Activated T-helper 1 cell treated with anti-CD3 and anti-CD28 coated beads, Interleukin-12 subunit alpha, Interleukin-12 subunit beta, Interleukin-2, Interleukin-4 antibody, amounts not matched to agents 30 ng/mL and 10 ng/mL and 1 ng/mL, durations not matched to agents 14 hours and 24 hours and 36 hours (primary cell): ENCODE measurements at regions of chr6 and their contacts with region 1.

Region 1: DNA sequence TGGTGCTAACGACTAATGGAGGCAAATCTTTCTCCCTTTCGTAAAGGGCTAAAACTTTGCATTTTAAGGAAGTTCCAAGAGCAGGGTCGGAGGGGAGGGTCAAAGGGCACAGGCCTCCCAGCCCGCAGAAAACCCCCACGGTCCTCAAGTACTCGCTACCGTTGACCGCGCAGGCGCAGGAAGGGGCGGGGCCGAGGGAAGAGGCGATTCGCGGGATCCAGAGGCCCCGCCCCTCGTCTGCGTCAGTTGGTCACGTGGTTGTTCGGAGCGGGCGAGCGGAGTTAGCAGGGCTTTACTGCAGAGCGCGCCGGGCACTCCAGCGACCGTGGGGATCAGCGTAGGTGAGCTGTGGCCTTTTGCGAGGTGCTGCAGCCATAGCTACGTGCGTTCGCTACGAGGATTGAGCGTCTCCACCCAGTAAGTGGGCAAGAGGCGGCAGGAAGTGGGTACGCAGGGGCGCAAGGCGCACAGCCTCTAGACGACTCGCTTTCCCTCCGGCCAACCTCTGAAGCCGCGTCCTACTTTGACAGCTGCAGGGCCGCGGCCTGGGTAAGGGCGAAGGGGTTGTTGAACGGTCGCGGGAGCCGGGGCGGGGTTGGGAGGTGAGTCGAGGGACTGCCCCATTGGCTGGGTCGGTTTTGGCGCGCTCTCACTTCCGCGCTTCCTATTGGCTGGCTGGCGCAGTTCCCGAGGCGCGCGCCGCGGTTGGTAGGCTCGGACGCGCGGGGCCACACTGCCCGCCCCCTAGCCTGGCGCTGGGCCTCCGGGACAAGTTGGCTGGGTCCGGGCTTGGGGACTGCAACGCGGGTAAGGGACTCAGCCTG is at the start of gene GMNN:
- DNase-seq: peak; percentile 96
- H3K4me3 Mint-ChIP-seq: peak within 1 kb of the TSS; percentile 98
- H3K27ac Mint-ChIP-seq: peak within 1 kb of the TSS; percentile 98
- H3K4me1 Mint-ChIP-seq: peaks cover 39% of the 10 kb centered on the region
- H3K27me3 Mint-ChIP-seq: no peaks in the 10 kb centered on the region
- total RNA-seq, gene GMNN: 80.8 and 83.5 TPM in 2 replicates

Region 2: DNA sequence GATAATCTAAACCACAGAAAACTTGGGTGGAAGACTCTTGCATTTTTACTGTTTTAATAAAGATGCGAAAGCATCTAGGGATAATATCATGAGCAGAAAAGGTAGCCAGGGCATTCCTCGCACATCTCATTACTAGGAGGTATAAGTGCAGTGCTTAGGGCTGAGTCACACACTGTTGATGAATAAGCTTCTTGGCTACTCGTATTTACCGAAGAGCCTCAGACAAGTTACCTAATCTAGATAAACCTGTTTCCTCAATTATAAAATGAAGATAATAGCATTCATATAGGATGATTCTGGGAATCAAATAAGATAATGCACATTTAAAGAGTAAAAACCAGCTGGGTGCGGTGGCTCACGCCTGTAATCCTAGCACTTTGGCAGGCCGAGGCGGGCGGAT is 128.1 kb before region 1 on chr6:
- intact Hi-C with region 1: loop called (anchors 5 kb)
- DNase-seq: no peak
- H3K4me3 Mint-ChIP-seq: peak overlapping the region; percentile 86
- H3K27ac Mint-ChIP-seq: peak overlapping the region; percentile 72
- H3K4me1 Mint-ChIP-seq: peaks cover 18% of the 10 kb centered on the region
- H3K27me3 Mint-ChIP-seq: peaks cover 20% of the 10 kb centered on the region

Region 3: DNA sequence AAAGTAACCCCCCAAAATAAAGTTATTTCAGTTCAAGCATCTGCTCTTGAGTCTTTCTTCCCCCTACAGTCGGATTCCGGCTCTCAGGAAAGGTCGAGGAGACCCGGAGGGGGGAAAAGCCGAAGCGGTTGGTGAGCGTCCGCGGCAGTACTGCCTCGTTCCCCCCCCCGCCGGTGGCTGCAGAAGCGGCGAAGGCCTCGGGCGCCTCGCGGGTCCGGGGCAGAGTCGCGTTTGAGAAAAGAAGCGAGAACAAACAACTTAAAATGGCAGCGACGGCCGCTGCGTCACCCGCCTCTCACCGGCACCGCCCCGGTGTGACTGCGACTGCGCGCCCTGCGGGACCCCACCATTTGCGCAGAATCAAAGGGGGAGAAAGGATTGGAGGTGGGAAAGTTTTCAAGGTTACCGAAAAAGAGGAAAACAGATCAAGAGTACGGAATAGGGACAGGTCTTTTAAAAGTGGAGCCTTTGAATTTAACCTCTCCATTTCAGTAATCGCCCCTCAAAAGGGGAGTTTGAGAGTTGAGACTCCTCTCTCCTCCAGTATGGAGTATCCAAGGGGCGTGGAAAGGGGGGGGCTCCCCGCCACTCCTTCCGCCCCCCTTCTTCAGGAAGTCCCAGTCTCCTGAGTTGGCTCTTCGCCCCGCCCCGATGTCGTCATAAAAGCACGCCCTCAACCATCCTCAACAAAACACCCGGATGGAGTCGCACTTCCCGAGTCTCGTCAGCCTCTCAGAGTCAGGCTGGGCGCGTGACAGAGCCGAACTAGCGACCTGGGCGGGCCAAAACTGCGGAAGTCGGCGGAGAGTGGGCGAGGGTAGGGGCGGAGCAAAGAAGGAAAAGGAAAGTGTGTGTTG is 54.1 kb before region 1 on chr6:
- intact Hi-C with region 1: loop called (anchors 1 kb)
- DNase-seq: peak; percentile 100
- H3K4me3 Mint-ChIP-seq: peak overlapping the region; percentile 100
- H3K27ac Mint-ChIP-seq: peak overlapping the region; percentile 96
- H3K4me1 Mint-ChIP-seq: peaks cover 47% of the 10 kb centered on the region
- H3K27me3 Mint-ChIP-seq: no peaks in the 10 kb centered on the region

Region 4: GRCh38 chr6:24788048-24788665 is 13.2 kb after region 1 on chr6:
- intact Hi-C with region 1: loop called (anchors 1 kb)
- DNase-seq: no peak
- H3K4me3 Mint-ChIP-seq: no peak overlapping the region
- H3K27ac Mint-ChIP-seq: peak overlapping the region; percentile 78
- H3K4me1 Mint-ChIP-seq: peaks cover 15% of the 10 kb centered on the region
- H3K27me3 Mint-ChIP-seq: no peaks in the 10 kb centered on the region

Region 5: GRCh38 chr6:24876499-24877465 is 101.9 kb after region 1 on chr6:
- intact Hi-C with region 1: no loop called
- DNase-seq: no peak
- H3K4me3 Mint-ChIP-seq: no peak overlapping the region
- H3K27ac Mint-ChIP-seq: peak overlapping the region; percentile 79
- H3K4me1 Mint-ChIP-seq: peaks cover 45% of the 10 kb centered on the region
- H3K27me3 Mint-ChIP-seq: no peaks in the 10 kb centered on the region

Region 6: GRCh38 chr6:25070547-25071366 is 295.8 kb after region 1 on chr6:
- intact Hi-C with region 1: loop called (anchors 5 kb)
- DNase-seq: peak; percentile 74
- H3K4me3 Mint-ChIP-seq: no peak overlapping the region
- H3K27ac Mint-ChIP-seq: peak overlapping the region; percentile 86
- H3K4me1 Mint-ChIP-seq: peaks cover 10% of the 10 kb centered on the region
- H3K27me3 Mint-ChIP-seq: peaks cover 3% of the 10 kb centered on the region